Activated CD4-positive, alpha-beta T cell treated with anti-CD3 and anti-CD28 coated beads for 36 hours (primary cell): ENCODE measurements at regions of chr2 and their contacts with region 1.

Region 1: DNA sequence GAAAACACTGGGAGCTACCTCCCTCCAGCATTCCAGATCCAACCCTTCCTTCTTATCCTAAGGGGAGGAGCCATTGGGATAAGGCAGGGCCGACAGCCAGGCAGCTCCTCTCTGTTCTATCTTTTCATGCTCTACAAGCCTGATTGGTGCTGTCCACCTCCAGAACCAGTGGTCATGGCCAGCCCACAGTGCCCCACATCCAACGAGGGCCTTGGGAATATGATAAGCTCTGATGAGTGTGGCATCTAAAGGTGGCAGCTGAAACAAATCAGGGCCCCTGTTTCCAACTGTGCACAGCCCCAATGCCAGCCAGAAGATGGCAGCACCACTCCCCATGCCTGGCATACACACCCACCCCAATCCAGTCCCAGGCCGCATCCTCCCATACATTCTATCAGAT is 329.3 kb downstream of the C1D start:
- DNase-seq: peak; percentile 23
- ATAC-seq: no peak
- H3K4me3 Mint-ChIP-seq: no peak overlapping the region
- H3K27ac Mint-ChIP-seq: no peak overlapping the region
- H3K4me1 Mint-ChIP-seq: no peaks in the 10 kb centered on the region
- H3K27me3 Mint-ChIP-seq: no peaks in the 10 kb centered on the region

Region 2: GRCh38 chr2:67840460-67841068 is 107.0 kb after region 1 on chr2:
- CTCF ChIA-PET with region 1: no interaction called
- POLR2A ChIA-PET with region 1: no interaction called
- intact Hi-C with region 1: loop called in 1 of 2 experiments (anchors 5 kb)
- DNase-seq: peak; percentile 65
- ATAC-seq: no peak
- H3K4me3 Mint-ChIP-seq: no peak overlapping the region
- H3K27ac Mint-ChIP-seq: no peak overlapping the region
- H3K4me1 Mint-ChIP-seq: no peaks in the 10 kb centered on the region
- H3K27me3 Mint-ChIP-seq: peaks cover 7% of the 10 kb centered on the region

Region 3: DNA sequence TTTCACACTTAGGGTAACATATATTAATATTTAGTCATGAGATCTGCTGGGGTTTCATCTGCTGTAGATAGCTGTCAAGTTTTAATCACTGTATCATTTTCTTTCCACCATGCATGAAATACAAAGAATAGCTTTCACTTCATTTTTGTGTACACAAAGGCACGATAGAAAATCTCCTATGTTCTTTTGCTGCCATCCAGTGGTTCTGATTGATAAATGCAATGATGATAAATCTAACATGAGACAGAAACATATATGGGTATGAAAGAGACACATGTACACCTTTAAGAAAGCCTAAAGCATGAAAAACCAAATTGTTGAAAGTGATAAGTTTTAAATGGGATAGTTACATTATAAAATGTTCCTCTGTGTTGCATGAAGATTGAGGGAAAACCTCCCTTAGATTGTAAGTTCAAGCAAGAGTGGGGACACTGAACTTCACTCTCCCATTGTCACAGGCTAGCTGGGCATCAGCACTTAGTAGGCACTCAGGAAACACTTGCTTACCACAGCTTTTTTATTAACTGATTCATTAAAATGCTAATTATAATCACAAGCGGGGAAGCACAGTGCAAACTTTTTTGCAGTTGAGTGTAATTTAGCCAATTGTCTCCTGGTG is 298.1 kb after region 1 on chr2:
- CTCF ChIA-PET with region 1: no interaction called
- POLR2A ChIA-PET with region 1: no interaction called
- intact Hi-C with region 1: loop called in 1 of 2 experiments (anchors 1 kb)
- DNase-seq: no peak
- ATAC-seq: no peak
- H3K4me3 Mint-ChIP-seq: no peak overlapping the region
- H3K27ac Mint-ChIP-seq: no peak overlapping the region
- H3K4me1 Mint-ChIP-seq: no peaks in the 10 kb centered on the region
- H3K27me3 Mint-ChIP-seq: no peaks in the 10 kb centered on the region

Region 4: DNA sequence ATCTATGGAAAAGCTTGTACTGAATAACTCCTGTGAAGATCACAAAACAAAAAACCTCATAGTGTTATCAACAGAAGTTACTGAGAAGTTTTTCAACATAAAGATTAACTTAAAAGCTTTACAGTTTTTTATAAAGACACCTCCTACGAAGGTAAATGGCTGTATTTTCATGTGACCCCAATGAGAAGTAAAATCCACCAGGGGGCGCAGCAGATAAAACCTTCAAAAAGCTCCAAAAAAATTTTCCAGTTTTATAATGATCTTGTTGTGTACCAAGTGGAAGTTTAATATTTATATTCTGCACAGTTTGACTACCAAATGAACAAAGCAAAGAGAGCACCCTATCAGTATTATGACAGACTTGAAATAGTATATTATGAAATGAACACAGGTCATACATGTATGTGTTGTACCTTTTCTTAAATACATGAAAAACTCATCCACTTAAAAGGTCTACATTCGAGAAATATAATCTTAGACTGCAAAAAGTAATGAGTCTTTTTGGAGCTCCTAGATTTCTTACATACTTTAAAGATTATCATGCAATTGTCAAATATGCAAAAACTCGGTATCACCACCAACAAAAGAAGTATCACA is 462.7 kb after region 1 on chr2:
- CTCF ChIA-PET with region 1: no interaction called
- POLR2A ChIA-PET with region 1: no interaction called
- intact Hi-C with region 1: no loop called
- DNase-seq: peak; percentile 57
- ATAC-seq: no peak
- H3K4me3 Mint-ChIP-seq: no peak overlapping the region
- H3K27ac Mint-ChIP-seq: no peak overlapping the region
- H3K4me1 Mint-ChIP-seq: peaks cover 52% of the 10 kb centered on the region
- H3K27me3 Mint-ChIP-seq: no peaks in the 10 kb centered on the region